Common myeloid progenitor, CD34-positive (primary cell): ENCODE measurements at regions of chr2 and their contacts with region 1.

Region 1: DNA sequence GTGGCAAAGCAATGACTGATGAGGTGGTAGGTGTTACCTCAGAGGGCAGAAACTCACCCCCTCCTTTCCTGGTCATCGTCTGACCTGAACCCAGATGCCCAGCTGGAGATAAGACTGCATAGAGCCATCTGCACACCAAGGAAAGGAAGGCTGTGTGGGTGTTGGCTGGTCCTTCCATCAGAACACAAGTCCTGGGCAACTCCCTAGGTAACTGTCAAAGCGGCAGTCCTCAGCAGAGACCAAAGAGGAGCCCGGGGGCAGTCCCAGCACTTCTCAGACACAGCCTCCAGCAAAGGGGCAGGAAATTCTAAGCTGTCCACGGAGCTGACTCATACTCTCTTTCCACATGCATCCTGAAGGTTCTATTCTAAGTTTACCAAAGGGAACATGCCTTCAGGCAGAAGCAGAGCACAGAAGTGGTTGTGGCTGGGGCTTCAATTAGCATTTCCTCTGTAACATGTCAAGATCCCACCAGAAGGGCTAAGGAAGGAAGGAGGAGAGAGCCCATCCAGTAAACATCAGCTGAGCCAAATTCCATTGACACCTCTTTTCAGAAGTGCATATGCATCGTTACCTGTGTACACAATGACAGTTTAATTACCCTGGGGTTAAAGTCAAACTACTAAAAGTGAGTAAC is 54.7 kb downstream of the SPRED2 start:
- DNase-seq: peak; percentile 50 to 87 (median 87)
- H3K4me3 ChIP-seq: peak overlapping the region in 2 of 7 experiments; percentile 4 to 34
- H3K27ac ChIP-seq: peak overlapping the region in 1 of 2 experiments; percentile 35
- H3K4me1 ChIP-seq: peaks cover 3 to 59% (median 39%) of the 10 kb centered on the region in 4 experiments
- H3K27me3 ChIP-seq: no peaks in the 10 kb centered on the region

Region 2: DNA sequence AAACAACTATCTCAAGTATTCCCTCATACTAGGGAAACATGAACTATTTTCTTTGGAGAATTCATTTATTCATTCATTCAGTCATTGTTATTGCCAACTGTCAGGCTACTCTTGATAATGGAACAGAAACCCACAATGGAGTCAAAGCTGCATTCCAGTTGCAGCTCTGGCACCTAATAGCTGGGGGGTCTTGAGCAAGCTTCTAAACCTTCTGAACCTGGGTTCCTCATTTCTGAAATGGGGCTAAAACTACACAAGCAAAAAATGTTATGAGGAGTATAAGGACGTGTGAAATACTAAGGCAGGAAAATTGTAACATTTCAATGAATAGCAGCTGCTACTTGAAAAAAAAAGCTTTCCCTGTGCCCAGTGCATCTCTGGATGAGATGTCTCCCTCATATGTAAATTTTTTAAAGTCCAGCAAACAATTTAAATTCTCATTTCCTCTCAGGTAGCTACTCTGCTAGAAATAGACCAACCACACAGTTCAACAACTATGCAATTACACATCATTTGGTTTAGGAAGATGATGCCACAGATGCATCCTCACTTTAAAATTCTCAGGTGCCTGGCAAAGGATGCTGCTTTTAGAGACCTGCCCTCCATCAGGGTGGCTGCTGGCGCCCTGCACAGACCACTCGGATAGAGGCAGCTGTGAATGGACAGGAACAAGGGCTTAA is 16.2 kb after region 1 on chr2:
- CTCF ChIA-PET with region 1: interaction called, 14 read pairs
- POLR2A ChIA-PET with region 1: no interaction called
- DNase-seq: no peak
- H3K4me3 ChIP-seq: no peak overlapping the region
- H3K27ac ChIP-seq: no peak overlapping the region
- H3K4me1 ChIP-seq: peaks cover 6 to 52% (median 23%) of the 10 kb centered on the region in 4 experiments
- H3K27me3 ChIP-seq: no peaks in the 10 kb centered on the region

Region 3: DNA sequence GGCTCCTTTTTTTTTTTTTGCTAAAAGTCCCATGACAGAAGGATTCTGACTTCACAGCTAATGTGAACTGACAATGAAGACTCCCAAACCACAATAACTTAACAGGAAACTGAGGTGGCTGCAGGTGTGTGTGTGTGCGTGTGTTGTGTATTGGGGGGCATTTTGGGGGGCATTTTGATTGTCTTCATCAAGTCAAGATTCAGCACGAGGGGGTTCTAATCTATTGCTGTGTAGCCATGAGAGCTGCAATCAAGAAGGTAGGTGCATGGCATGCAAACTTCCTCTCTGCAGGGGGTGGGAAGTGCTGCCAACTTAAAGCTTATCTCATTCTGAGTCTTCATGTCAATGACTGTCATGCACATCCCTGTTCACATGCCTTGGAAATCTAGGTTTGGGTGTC is 29.6 kb after region 1 on chr2:
- CTCF ChIA-PET with region 1: no interaction called
- POLR2A ChIA-PET with region 1: no interaction called
- DNase-seq: no peak
- H3K4me3 ChIP-seq: no peak overlapping the region
- H3K27ac ChIP-seq: no peak overlapping the region
- H3K4me1 ChIP-seq: peaks cover 4 to 27% (median 16%) of the 10 kb centered on the region in 4 experiments
- H3K27me3 ChIP-seq: no peaks in the 10 kb centered on the region

Region 4: DNA sequence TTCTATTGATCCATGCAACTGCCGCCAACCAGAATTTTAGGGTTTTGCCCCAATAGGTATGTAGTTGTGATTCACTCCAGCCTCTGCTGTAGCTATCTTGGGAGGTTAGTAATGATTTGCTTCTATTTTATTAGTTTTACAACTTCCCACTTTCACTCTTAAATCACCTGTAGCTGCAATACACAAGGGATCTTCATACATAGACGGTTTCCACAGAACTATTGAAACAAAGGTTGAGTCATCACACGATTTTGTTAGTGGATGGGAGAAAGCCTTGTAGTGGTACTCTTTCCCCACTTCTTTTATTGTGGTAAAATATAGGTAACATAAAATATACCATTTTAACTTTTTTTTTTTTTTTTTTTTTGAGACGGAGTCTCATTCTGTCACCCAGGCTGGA is 158.9 kb after region 1 on chr2:
- CTCF ChIA-PET with region 1: no interaction called
- POLR2A ChIA-PET with region 1: no interaction called
- DNase-seq: no peak
- H3K4me3 ChIP-seq: no peak overlapping the region
- H3K27ac ChIP-seq: no peak overlapping the region
- H3K4me1 ChIP-seq: no peaks in the 10 kb centered on the region
- H3K27me3 ChIP-seq: no peaks in the 10 kb centered on the region